CD8-positive, alpha-beta T cell (primary cell): ENCODE measurements at regions of chr20 and their contacts with region 1.

Region 1: DNA sequence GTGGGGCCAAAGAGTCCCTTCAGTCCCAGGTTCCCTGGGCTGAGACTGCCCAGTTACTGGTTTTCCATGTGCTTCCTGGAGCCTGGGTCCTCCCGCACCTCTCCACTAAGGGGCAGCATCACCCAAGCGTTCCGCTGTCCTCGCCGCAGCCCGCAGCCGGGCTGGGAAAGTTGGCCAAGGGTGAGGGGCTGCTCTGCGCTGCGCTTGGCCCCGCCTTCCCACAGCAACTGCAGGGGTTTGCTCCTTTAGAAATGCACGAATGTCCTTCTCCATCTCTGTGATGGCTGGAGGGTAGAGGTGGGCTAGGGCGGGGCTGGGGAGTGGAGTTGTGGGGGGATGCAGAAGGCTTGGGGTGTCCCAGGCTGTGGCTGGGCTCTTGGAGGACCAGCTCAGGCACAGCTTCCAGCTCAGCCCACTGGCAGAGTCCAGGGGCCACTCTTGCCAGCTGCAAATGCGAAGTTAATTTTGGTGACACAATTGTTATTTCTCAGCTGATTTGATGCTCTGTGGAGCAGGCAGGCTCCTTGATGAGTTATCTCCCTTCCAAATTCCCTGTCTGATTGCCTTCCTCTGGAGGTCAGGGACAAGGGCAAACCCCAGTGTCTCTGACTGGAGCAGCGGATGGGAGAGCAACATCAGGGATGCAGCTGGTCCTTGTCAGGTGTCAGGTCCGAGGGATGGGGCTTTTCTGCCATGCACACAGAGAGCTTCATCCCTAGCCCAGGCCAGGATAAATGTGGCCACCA is 63.2 kb downstream of the NOL4L start:
- DNase-seq: peak in 8 of 9 experiments; percentile 55 to 83 (median 74)
- ATAC-seq: peak; percentile 78
- H3K4me3 ChIP-seq: no peak overlapping the region
- H3K4me3 Mint-ChIP-seq: peak overlapping the region; percentile 54
- H3K27ac ChIP-seq: peak overlapping the region in 1 of 2 experiments; percentile 52
- H3K27ac Mint-ChIP-seq: peak overlapping the region; percentile 92
- H3K4me1 ChIP-seq: peaks cover 66% of the 10 kb centered on the region
- H3K4me1 Mint-ChIP-seq: peaks cover 66% of the 10 kb centered on the region
- H3K27me3 ChIP-seq: no peaks in the 10 kb centered on the region
- H3K27me3 Mint-ChIP-seq: no peaks in the 10 kb centered on the region
- CTCF ChIP-seq: peak; percentile 79

Region 2: DNA sequence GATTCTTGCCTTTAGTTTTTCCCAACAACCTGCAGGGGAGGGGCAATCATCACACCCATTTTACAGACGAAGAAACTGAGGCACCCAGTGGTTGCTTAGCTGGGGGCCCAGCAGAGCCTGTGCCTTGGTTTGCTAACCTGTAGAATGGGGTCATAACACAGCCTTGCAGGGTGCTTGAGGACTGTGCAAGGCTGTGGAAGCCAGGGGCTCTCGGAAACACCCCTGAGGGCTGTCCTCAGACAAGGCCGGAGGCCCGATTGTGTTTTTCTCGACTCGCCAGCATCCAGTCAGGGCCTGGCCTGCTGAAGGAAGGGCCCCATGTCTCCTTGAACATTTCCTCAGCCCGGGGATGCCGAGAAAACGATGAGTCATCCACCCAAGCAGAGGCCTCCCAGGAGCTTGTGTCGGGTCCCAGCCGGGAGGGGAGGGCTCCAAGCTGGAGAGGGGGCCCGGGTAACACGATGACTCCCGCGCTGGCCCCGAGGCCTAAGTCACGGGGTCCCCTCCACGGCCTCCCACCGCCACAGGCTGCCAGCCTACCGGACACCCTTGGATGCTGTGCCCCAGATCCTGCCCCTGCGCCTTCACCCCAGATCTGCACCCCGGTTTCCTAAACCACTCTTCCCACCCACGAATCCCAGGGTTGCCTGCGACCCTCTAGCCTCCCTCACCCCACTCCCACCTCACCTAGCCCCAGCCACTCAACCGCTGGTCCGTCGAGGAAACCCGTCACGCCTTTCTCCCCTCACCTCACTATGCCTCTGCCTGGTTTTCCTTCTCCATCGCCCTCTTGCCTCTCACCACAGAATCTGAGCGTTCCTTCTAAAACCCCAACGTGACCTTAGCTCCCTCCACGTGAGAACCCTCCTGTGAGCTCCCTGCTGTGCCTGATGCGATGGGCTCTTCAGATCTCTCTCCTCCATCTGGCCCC is 52.6 kb after region 1 on chr20:
- CTCF ChIA-PET with region 1: interaction called, 11 read pairs
- POLR2A ChIA-PET with region 1: interaction called, 6 read pairs
- intact Hi-C with region 1: no loop called
- DNase-seq: peak in 1 of 9 experiments; percentile 41
- ATAC-seq: peak; percentile 34
- H3K4me3 ChIP-seq: no peak overlapping the region
- H3K4me3 Mint-ChIP-seq: no peak overlapping the region
- H3K27ac ChIP-seq: peak overlapping the region; percentile 5 to 46
- H3K27ac Mint-ChIP-seq: peak overlapping the region; percentile 72
- H3K4me1 ChIP-seq: peaks cover 86% of the 10 kb centered on the region
- H3K4me1 Mint-ChIP-seq: peaks cover 57% of the 10 kb centered on the region
- H3K27me3 ChIP-seq: no peaks in the 10 kb centered on the region
- H3K27me3 Mint-ChIP-seq: no peaks in the 10 kb centered on the region
- CTCF ChIP-seq: no peak

Region 3: GRCh38 chr20:32585011-32585518 is 63.1 kb after region 1 on chr20 and contains the start of gene NOL4L:
- CTCF ChIA-PET with region 1: interaction called, 28 read pairs
- POLR2A ChIA-PET with region 1: interaction called, 4 read pairs
- intact Hi-C with region 1: loop called in 1 of 2 experiments (anchors 5 kb)
- DNase-seq: peak in 8 of 9 experiments; percentile 24 to 70 (median 52)
- ATAC-seq: peak; percentile 25
- H3K4me3 ChIP-seq: peak within 1 kb of the TSS; percentile 59 to 74
- H3K4me3 Mint-ChIP-seq: peak within 1 kb of the TSS; percentile 93
- H3K27ac ChIP-seq: no peak within 1 kb of the TSS
- H3K27ac Mint-ChIP-seq: peak within 1 kb of the TSS; percentile 90
- H3K4me1 ChIP-seq: peaks cover 33% of the 10 kb centered on the region
- H3K4me1 Mint-ChIP-seq: peaks cover 42% of the 10 kb centered on the region
- H3K27me3 ChIP-seq: no peaks in the 10 kb centered on the region
- H3K27me3 Mint-ChIP-seq: no peaks in the 10 kb centered on the region
- CTCF ChIP-seq: no peak
- total RNA-seq, gene NOL4L: 39.1 to 39.7 TPM